ENCODE measurements at regions of chr6 and their contacts with region 1.

Region 1: DNA sequence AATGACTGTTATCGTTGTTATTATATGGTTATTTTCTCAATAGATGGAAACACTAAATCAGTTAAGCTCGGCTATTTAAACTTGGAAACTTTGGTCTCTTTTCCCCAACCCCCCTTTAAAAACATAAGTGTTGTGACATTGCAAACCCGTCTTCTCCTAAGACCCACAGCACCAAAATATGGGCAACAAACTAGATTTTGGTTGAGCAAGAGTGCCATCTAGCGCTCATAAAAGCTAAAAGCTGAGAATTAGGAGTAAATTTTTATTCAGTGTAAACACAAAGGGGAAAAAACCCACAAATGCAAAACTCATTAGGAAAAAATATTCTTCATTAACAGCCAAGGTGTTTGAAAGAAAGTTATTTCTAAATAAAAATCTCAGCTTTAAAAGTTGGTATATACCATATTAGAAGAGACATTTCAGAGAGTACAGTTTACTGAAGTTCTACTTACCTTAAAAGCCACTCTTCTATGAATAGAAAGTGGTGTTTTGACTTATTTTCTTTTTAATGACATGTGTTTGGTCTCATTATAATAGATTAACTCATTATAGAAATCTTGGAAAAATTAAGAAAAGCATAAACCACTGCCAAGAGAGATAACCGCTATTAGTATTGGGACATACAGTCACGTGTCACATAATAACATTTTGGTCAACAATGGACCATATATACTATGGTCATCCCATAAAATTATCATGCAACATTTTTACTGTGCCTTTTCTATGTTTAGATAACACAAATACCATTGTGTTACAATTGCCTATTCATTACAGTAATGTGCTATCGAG is 21.1 kb downstream of the SESN1 start:
- DNase-seq: peak; percentile 31
- H3K4me3 Mint-ChIP-seq: no peak overlapping the region
- H3K27ac Mint-ChIP-seq: no peak overlapping the region
- H3K4me1 Mint-ChIP-seq: peaks cover 21% of the 10 kb centered on the region
- H3K27me3 Mint-ChIP-seq: peaks cover 12% of the 10 kb centered on the region

Region 2: DNA sequence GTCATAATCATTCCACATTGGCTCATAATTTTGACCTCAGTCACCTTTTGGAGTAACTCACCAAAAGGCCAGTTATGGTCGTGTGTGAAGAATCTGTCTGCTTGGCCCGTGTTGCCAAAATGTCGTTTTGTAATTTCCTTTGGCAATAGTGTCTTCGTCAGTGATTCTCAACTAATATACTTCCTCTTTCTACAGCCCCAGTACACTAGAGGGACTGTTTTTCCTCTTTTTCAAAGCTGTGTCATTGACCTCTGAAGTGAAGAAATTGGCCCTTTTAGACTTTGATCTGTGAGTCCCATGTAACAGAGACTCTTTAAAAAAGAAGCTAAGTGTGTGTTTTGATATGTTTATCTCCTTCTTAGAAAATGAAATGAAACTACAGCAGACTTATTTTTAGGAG is 507.6 kb before region 1 on chr6:
- intact Hi-C with region 1: loop called (anchors 2 kb)
- DNase-seq: no peak
- H3K4me3 Mint-ChIP-seq: no peak overlapping the region
- H3K27ac Mint-ChIP-seq: no peak overlapping the region
- H3K4me1 Mint-ChIP-seq: peaks cover 36% of the 10 kb centered on the region
- H3K27me3 Mint-ChIP-seq: peaks cover 51% of the 10 kb centered on the region

Region 3: DNA sequence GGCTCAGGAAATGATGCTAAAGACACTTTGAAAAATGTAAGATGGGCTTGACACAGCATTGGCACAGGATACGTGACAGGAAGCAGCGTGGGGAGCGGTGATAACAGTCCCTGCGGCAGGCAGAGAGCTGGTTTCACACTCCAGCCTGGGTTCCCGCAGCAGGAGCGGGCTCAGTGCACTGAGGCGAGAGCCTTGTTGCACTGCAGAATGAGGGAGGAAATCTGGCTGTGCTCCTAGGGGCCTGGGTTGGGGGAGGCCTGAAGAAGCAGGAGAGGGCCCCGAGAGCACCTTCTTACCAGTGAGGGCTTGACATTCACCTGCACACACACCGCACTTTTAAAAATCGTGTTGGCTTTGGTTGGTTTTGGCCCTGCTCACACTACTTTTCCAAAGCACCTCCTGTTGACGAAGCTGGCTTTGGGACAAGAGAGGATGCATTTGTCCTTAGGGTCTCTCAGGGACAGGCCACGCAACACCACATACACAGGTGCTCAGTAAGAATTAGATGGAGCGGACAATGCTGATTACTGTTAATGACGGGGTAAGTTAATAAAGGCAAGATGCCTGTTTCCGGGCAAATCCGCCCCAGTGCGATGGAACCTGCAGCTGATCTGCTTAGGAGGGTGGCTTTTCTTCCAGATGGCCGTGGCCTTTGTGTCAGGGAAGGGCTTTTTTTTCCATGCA is 274.7 kb before region 1 on chr6:
- intact Hi-C with region 1: loop called (anchors 2 kb)
- DNase-seq: peak; percentile 43
- H3K4me3 Mint-ChIP-seq: peak overlapping the region; percentile 80
- H3K27ac Mint-ChIP-seq: peak overlapping the region; percentile 61
- H3K4me1 Mint-ChIP-seq: peaks cover 34% of the 10 kb centered on the region
- H3K27me3 Mint-ChIP-seq: peaks cover 12% of the 10 kb centered on the region

Region 4: GRCh38 chr6:108921547-108922361 is 151.8 kb before region 1 on chr6:
- intact Hi-C with region 1: loop called (anchors 2 kb)
- DNase-seq: no peak
- H3K4me3 Mint-ChIP-seq: peak overlapping the region; percentile 8
- H3K27ac Mint-ChIP-seq: peak overlapping the region; percentile 63
- H3K4me1 Mint-ChIP-seq: peaks cover 34% of the 10 kb centered on the region
- H3K27me3 Mint-ChIP-seq: peaks cover 22% of the 10 kb centered on the region

Region 5: GRCh38 chr6:109382576-109383437 is 309.3 kb after region 1 on chr6:
- intact Hi-C with region 1: no loop called
- DNase-seq: peak; percentile 88
- H3K4me3 Mint-ChIP-seq: peak overlapping the region; percentile 89
- H3K27ac Mint-ChIP-seq: peak overlapping the region; percentile 98
- H3K4me1 Mint-ChIP-seq: peaks cover 46% of the 10 kb centered on the region
- H3K27me3 Mint-ChIP-seq: peaks cover 6% of the 10 kb centered on the region